Heart left ventricle (tissue), 16 donors: ENCODE measurements at regions of chr7 and their contacts with region 1.

Region 1: DNA sequence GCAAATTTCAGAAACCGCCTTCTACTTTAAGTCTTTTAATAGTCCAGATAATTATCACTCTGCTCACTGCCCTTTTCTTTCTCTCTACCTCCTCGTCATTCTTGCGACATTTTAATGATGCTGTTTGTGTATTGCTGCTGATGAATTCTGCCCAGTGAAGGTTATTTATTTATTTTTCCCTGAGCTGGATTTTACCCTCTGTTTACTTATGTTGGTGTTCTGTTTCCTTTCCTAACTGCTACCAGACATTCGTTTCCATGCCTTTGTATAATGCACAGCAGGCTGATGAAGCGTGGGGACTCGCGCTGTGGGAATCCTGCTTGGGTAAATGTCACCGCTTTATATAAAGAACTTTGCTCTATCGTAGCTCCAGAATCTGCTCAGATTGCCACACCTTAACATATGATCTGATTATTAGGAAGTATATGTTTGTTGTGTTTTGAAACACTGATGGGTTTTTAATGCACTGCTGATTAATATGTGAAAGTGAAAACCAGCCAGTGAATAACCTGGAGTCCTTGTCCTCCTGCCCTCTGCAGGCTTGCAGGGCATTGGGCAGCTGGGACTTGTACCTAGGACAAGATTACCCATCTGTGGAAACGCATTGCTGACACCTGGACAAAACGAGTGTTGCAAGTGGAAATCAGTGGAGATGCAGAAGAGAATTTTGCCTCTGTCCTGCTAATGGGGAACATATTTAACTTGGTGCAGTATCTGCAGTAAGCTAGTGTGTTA is 291.5 kb downstream of the SDK1 start:
- DNase-seq: no peak
- ATAC-seq: no peak
- H3K4me3 ChIP-seq: no peak overlapping the region
- H3K27ac ChIP-seq: no peak overlapping the region
- H3K4me1 ChIP-seq: no peaks in the 10 kb centered on the region
- H3K27me3 ChIP-seq: no peaks in the 10 kb centered on the region
- CTCF ChIP-seq: no peak
- POLR2A ChIP-seq: no peak

Region 2: DNA sequence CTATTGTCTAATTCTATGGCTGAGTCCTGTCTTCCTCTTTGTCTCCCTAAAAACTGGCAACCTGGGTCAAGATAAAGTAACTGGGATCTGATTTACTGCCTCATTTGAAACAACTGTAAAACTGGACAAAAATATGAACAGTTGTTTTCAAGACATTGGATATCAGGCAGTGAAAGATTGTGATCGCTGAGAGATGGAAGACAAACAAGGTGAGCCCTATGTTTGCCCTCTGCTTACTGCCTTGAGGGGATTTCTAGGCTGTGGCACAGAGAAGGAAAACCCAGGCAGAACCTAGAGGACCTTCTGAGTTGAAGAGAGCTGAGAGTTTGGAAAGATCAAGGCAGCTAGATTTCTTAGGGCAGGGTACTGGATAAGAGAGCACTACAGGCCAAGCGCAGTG is 36.1 kb after region 1 on chr7:
- intact Hi-C with region 1: loop called in 1 of 10 experiments (anchors 5 kb)
- DNase-seq: no peak
- ATAC-seq: no peak
- H3K4me3 ChIP-seq: no peak overlapping the region
- H3K27ac ChIP-seq: no peak overlapping the region
- H3K4me1 ChIP-seq: no peaks in the 10 kb centered on the region
- H3K27me3 ChIP-seq: no peaks in the 10 kb centered on the region
- CTCF ChIP-seq: no peak
- POLR2A ChIP-seq: no peak